ENCODE measurements at regions of chr1 and their contacts with region 1.

Region 1: DNA sequence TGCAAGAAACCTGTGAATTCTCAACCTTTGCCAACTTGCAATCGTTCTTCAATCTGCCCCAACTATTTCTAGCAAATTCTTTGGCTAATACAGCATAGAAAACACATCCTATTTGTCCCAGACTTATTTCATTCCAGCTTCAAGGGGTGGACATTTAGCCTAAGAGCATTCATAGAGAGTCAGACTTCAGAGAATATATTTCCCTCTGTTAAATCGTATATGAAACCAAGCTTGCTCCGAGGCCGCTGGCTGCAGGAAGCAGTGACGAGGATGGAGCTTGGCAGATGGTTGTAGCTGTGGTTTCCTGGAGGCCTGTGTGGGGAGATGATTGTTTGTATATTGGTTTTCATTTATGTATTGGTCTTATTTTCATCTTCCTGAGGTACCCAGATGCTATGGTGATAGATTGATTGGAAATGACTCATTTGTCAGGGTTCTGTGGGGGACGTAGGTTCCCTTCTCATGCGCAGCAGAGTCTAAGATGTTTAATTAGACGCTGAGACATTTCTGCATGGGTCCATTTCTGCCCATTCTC is 26.1 kb downstream of the MAN1C1 start:
- DNase-seq: peak; percentile 86
- H3K4me3 Mint-ChIP-seq: peak overlapping the region; percentile 68
- H3K27ac Mint-ChIP-seq: peak overlapping the region; percentile 77
- H3K4me1 Mint-ChIP-seq: peaks cover 76% of the 10 kb centered on the region
- H3K27me3 Mint-ChIP-seq: no peaks in the 10 kb centered on the region

Region 2: GRCh38 chr1:25624156-25624555 is 18.5 kb before region 1 on chr1:
- CTCF ChIA-PET with region 1: interaction called, 24 read pairs
- intact Hi-C with region 1: loop called (anchors 1 kb)
- DNase-seq: peak; percentile 63
- H3K4me3 Mint-ChIP-seq: no peak overlapping the region
- H3K27ac Mint-ChIP-seq: no peak overlapping the region
- H3K4me1 Mint-ChIP-seq: peaks cover 80% of the 10 kb centered on the region
- H3K27me3 Mint-ChIP-seq: no peaks in the 10 kb centered on the region

Region 3: DNA sequence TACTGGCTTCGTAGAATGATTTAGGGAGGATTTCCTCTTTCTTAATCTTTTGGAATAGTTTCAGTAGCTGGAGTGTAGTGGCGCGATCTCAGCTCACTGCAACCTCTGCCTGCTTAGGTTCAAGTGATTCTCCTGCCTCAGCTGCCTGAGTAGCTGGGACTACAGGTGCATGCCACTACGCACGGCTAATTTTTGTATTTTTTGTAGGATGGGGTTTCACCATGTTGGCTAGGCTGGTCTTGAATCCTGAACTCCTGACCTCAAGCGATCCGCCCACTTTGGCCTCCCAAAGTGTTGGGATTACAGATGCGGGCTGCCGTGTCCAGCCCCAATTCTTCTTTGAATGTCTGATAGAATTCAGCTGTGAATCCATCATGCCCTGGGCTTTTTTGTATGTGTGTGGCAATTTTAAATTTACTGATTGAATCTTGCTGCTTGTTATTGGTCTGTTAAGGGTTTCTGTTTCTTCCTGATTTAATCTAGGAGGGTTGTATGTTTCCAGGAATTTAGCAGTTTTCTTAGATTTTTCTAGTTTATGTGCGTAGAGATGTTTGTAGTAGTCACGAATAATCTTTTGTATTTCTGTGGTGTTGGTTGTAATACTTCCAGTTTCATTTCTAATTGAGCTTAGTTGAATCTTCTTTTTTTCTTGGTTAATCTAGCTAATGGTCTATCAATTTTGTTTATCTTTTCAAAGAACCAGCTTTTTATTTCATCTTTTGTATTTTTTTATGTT is 10.7 kb before region 1 on chr1:
- CTCF ChIA-PET with region 1: interaction called, 8 read pairs
- intact Hi-C with region 1: loop called (anchors 1 kb)
- DNase-seq: peak; percentile 34
- H3K4me3 Mint-ChIP-seq: peak overlapping the region; percentile 82
- H3K27ac Mint-ChIP-seq: peak overlapping the region; percentile 87
- H3K4me1 Mint-ChIP-seq: peaks cover 71% of the 10 kb centered on the region
- H3K27me3 Mint-ChIP-seq: no peaks in the 10 kb centered on the region

Measured in activated naive CD4-positive, alpha-beta T cell treated with anti-CD3 and anti-CD28 coated beads for 36 hours (primary cell).